Naive thymus-derived CD4-positive, alpha-beta T cell (primary cell): ENCODE measurements at regions of chr7 and their contacts with region 1.

Region 1: DNA sequence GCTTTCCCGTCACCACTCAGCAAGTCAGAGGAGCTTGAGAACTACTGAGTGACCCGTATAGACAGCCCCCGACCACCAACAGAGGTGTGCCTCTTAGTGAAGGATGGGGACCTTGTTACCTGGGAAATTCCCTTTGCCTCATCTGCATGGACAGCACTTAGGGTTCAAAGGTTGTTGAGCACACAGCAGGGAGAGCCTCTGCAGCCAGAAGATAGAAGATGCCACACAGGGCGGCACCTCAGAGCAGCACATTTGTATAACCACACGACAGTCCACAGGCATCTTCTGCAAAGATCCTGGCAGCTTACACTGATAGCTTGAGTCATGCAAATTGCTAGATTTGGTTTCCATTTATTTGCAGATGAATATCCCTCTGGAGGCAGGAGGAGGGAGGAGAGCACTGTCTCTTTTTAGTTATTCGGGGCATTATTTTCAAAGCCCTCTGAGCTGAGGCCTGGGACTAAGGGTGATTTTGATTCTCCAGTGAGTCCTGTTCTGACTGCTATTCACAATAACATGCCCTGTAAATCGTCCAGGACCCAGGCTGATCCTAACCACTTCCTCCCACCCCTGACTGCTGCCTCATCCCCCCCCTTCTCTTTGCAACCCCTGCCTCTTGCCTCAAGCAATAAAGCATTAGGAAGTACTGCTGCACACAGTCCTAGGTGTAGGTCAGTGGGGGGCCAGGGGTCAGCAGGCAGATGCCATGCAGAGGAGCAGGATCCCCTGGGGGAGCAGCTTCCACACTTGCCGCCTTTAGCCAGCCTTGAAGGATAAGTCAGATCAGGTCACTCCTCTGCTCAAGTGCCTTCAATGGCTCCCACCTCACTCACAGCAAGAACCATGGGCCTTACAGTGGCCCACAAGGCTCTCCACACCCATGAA is 24.6 kb upstream of the INMT start:
- DNase-seq: peak in 8 of 9 donors; percentile 30 to 86 (median 81)
- ATAC-seq: peak; percentile 93
- H3K4me3 ChIP-seq: peak overlapping the region; percentile 86
- H3K4me3 Mint-ChIP-seq: peak overlapping the region; percentile 76 to 91 (median 90)
- H3K27ac ChIP-seq: peak overlapping the region; percentile 67
- H3K27ac Mint-ChIP-seq: peak overlapping the region; percentile 86 to 96 (median 91)
- H3K4me1 ChIP-seq: peaks cover 24 to 52% of the 10 kb centered on the region in 2 donors
- H3K4me1 Mint-ChIP-seq: peaks cover 46 to 79% (median 77%) of the 10 kb centered on the region in 7 donors
- H3K27me3 ChIP-seq: no peaks in the 10 kb centered on the region
- H3K27me3 Mint-ChIP-seq: no peaks in the 10 kb centered on the region

Region 2: DNA sequence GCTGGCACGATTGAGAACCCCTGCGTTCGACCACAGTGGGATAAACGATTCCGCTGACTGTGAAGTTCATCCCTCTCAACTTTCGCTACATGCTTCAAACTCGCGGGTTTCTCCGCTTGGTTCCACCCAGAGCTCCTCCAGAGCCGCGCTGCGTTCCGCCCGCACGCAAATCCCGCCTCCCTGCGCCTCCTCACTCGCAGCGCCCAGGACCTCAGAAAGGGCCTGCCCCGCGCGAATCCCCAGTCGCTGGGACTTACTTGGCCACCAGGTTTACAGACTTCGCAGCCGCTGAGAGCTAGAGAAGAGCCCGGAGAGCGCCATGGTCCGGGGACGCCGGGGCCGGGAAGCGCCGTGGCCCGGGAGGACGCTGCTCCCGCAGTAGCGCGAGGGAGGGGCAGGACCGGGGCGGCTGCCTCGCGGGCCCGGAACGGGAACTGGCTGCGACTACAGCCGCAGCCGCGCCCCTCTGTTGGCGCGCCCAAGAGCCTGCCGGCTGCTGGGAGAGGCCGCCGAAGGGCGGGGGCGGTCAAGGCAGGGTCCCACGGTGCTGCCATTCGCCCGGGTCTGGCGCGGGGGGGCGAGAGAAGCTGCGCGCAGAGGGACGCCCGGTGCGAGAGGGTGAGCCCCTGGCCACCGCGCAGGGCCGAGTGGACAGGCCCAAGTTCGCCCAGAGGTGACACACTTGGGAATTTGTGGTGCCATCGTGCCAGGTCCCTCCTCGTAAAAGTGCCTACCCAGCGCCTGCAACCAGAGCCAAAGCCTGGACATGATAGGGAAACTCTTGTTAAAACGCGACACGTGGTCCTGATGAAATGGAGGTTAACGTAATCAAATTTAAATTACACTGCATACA is 248.7 kb before region 1 on chr7 and contains the start of gene NOD1:
- CTCF ChIA-PET with region 1: interaction called, 3 read pairs
- POLR2A ChIA-PET with region 1: no interaction called
- intact Hi-C with region 1: loop called in 1 of 2 experiments (anchors 2 kb)
- DNase-seq: peak; percentile 50 to 80 (median 65)
- ATAC-seq: peak; percentile 91
- H3K4me3 ChIP-seq: peak within 1 kb of the TSS; percentile 64
- H3K4me3 Mint-ChIP-seq: peak within 1 kb of the TSS in 9 of 10 donors; percentile 92 to 95 (median 94)
- H3K27ac ChIP-seq: peak within 1 kb of the TSS; percentile 80
- H3K27ac Mint-ChIP-seq: peak within 1 kb of the TSS in 6 of 9 donors; percentile 73 to 95 (median 90)
- H3K4me1 ChIP-seq: peaks cover 10 to 19% of the 10 kb centered on the region in 2 donors
- H3K4me1 Mint-ChIP-seq: peaks cover 22 to 54% (median 47%) of the 10 kb centered on the region in 7 donors
- H3K27me3 ChIP-seq: no peaks in the 10 kb centered on the region
- H3K27me3 Mint-ChIP-seq: no peaks in the 10 kb centered on the region
- total RNA-seq, gene NOD1: 17.3 to 24.6 (median 19.2) TPM

Region 3: DNA sequence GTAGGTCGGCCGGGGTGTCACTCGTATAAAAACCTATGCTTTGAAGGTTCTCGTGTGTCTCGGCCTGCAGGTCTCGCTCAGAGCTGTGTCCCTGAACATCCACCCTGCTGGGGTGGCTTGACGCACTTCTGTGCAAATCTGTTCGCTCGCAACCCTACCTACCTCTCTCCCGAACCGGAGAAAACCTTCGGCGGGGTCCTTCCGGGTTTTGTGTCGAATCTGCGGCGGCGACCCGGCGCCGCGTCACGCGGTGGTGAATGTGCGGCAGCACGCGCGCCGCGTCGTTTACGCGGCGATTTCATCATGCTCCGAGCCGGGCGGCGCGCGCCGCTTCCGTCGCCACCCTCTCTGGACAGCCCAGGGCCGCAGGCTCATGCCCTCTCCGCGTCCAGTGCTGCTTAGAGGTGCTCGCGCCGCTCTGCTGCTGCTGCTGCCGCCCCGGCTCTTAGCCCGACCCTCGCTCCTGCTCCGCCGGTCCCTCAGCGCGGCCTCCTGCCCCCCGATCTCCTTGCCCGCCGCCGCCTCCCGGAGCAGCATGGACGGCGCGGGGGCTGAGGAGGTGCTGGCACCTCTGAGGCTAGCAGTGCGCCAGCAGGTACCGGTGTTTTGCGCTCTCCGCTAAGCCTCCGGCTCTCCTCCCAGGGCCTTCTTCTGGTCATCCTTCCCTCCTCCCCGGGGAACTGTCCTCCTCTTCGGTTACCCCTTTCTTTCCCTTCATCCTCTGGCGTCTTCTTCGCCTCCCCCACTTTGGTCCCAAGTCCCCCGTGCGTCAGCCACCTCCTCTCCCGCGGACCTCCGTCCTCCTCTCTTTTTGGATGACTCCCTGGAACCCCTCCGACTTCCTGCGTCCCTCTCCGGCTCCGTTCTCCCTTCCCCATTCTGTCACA is 132.5 kb before region 1 on chr7 and contains the start of gene GARS1:
- CTCF ChIA-PET with region 1: interaction called, 4 read pairs
- POLR2A ChIA-PET with region 1: interaction called, 7 read pairs
- intact Hi-C with region 1: loop called (anchors 1 kb)
- DNase-seq: peak; percentile 85 to 92 (median 90)
- ATAC-seq: peak; percentile 91
- H3K4me3 ChIP-seq: peak within 1 kb of the TSS; percentile 62
- H3K4me3 Mint-ChIP-seq: peak within 1 kb of the TSS; percentile 91 to 100 (median 99)
- H3K27ac ChIP-seq: peak within 1 kb of the TSS; percentile 91
- H3K27ac Mint-ChIP-seq: peak within 1 kb of the TSS; percentile 97 to 100 (median 99)
- H3K4me1 ChIP-seq: peaks cover 3 to 22% of the 10 kb centered on the region in 2 donors
- H3K4me1 Mint-ChIP-seq: peaks cover 52 to 88% (median 77%) of the 10 kb centered on the region in 7 donors
- H3K27me3 ChIP-seq: no peaks in the 10 kb centered on the region
- H3K27me3 Mint-ChIP-seq: no peaks in the 10 kb centered on the region
- total RNA-seq, gene GARS1: 73.8 to 143 (median 75.8) TPM

Region 4: DNA sequence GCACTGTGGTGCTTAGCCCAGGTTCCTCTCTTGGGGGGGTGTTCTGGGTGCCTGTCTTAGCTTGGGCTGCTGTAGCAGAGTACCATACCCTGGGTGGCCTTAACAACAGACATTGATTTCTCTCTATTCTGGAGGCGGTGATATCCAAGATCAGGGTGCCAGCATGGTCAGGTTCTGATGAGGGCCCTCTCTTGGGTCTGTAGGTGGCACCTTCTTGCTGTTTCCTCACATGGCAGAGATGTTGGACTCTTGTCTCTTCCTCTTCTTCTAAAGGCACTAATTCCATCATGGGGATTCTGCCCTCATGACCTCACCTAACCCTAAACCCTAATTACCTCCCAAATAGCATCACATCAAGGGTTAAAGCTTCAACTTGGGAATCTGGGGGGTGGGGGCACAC is 25.1 kb before region 1 on chr7:
- CTCF ChIA-PET with region 1: interaction called, 8 read pairs
- POLR2A ChIA-PET with region 1: interaction called, 5 read pairs
- intact Hi-C with region 1: loop called (anchors 1 kb)
- DNase-seq: peak in 6 of 9 donors; percentile 18 to 53 (median 38)
- ATAC-seq: peak; percentile 34
- H3K4me3 ChIP-seq: no peak overlapping the region
- H3K4me3 Mint-ChIP-seq: no peak overlapping the region
- H3K27ac ChIP-seq: no peak overlapping the region
- H3K27ac Mint-ChIP-seq: peak overlapping the region in 2 of 9 donors; percentile 53 to 62
- H3K4me1 ChIP-seq: no peaks in the 10 kb centered on the region
- H3K4me1 Mint-ChIP-seq: peaks cover 7 to 30% (median 12%) of the 10 kb centered on the region in 7 donors
- H3K27me3 ChIP-seq: no peaks in the 10 kb centered on the region
- H3K27me3 Mint-ChIP-seq: peaks cover 0 to 11% (median 0%) of the 10 kb centered on the region in 5 donors

Region 5: DNA sequence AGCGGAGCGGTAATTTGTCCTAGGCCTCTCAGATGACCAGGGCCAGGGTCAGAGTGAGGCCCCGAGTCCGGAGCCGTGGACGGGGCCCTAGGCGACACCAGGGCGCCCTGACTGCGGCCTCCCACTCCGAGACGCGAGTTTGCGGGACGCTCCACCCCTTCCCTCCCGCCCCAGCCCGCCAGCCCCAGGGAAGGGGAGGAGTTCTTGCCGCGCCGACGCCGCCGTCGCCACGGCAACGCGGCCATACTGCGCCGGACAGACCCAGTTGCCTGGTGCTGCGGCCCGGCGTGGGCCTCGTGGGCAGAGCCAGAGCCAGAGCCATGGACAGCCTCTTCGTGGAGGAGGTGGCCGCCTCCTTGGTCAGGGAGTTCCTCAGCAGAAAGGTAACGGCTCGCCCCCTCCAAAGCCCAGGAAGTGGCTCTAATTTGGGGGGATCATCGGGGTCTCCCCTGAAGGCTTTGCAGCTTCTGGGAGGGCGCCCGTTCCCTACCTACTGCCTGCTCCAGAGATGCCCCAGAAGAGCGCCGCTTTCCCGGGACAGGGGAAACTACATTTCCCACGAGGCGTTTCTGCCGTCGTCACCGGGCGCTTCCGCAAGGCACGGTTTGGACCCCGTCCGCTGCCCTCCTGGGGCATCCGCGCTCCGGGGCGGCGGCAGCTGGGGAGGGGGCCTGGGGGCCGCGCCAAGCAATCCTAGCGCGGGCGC is 44.0 kb after region 1 on chr7 and contains the start of gene MINDY4:
- CTCF ChIA-PET with region 1: no interaction called
- POLR2A ChIA-PET with region 1: interaction called, 3 read pairs
- intact Hi-C with region 1: loop called (anchors 1 kb)
- DNase-seq: peak; percentile 30 to 69 (median 52)
- ATAC-seq: peak; percentile 89
- H3K4me3 ChIP-seq: peak within 1 kb of the TSS; percentile 82
- H3K4me3 Mint-ChIP-seq: peak within 1 kb of the TSS; percentile 68 to 94 (median 88)
- H3K27ac ChIP-seq: peak within 1 kb of the TSS; percentile 71
- H3K27ac Mint-ChIP-seq: peak within 1 kb of the TSS; percentile 51 to 83 (median 70)
- H3K4me1 ChIP-seq: no peaks in the 10 kb centered on the region
- H3K4me1 Mint-ChIP-seq: peaks cover 0 to 12% (median 6%) of the 10 kb centered on the region in 7 donors
- H3K27me3 ChIP-seq: no peaks in the 10 kb centered on the region
- H3K27me3 Mint-ChIP-seq: peaks cover 0 to 9% (median 0%) of the 10 kb centered on the region in 5 donors
- total RNA-seq, gene MINDY4: 0.82 to 1.5 (median 0.94) TPM